Heart right ventricle (tissue), 16 donors: ENCODE measurements at regions of chr16 and their contacts with region 1.

Region 1: GRCh38 chr16:30395155-30395991 is at the start of gene ZNF48:
- DNase-seq: peak; percentile 88
- ATAC-seq: peak; percentile 96 to 99 (median 98)
- H3K4me3 ChIP-seq: peak within 1 kb of the TSS; percentile 66 to 98 (median 84)
- H3K27ac ChIP-seq: peak within 1 kb of the TSS; percentile 60 to 93 (median 87)
- H3K4me1 ChIP-seq: peaks cover 4 to 34% (median 27%) of the 10 kb centered on the region in 9 donors
- H3K27me3 ChIP-seq: no peaks in the 10 kb centered on the region
- CTCF ChIP-seq: peak in 7 of 9 donors; percentile 18 to 51 (median 33)
- total RNA-seq, gene ZNF48: 3.2 to 6.6 (median 5.4) TPM

Region 2: GRCh38 chr16:30355144-30355894 is 40.1 kb before region 1 on chr16 and contains the start of gene CD2BP2:
- intact Hi-C with region 1: loop called in 3 of 10 experiments (anchors 1 to 10 kb)
- DNase-seq: peak; percentile 92 to 98
- ATAC-seq: peak; percentile 87 to 96 (median 95)
- H3K4me3 ChIP-seq: peak within 1 kb of the TSS; percentile 47 to 99 (median 82)
- H3K27ac ChIP-seq: peak within 1 kb of the TSS; percentile 70 to 99 (median 97)
- H3K4me1 ChIP-seq: peaks cover 26 to 51% (median 40%) of the 10 kb centered on the region in 9 donors
- H3K27me3 ChIP-seq: no peaks in the 10 kb centered on the region
- CTCF ChIP-seq: no peak
- total RNA-seq, gene CD2BP2: 34.9 to 48.8 (median 38.8) TPM

Region 3: GRCh38 chr16:30447512-30448226 is 52.3 kb after region 1 on chr16:
- intact Hi-C with region 1: no loop called
- DNase-seq: no peak
- ATAC-seq: no peak
- H3K4me3 ChIP-seq: no peak overlapping the region
- H3K27ac ChIP-seq: no peak overlapping the region
- H3K4me1 ChIP-seq: peaks cover 2 to 39% (median 18%) of the 10 kb centered on the region in 9 donors
- H3K27me3 ChIP-seq: no peaks in the 10 kb centered on the region
- CTCF ChIP-seq: no peak